ENCODE measurements at regions of chr3 and their contacts with region 1.

Region 1: GRCh38 chr3:132399054-132399929 is 18.0 kb upstream of the DNAJC13 start:
- DNase-seq: peak; percentile 27
- H3K4me3 Mint-ChIP-seq: no peak overlapping the region
- H3K27ac Mint-ChIP-seq: no peak overlapping the region
- H3K4me1 Mint-ChIP-seq: no peaks in the 10 kb centered on the region
- H3K27me3 Mint-ChIP-seq: peaks cover 3% of the 10 kb centered on the region

Region 2: GRCh38 chr3:132034486-132035464 is 364.5 kb before region 1 on chr3 and contains the start of gene CPNE4:
- CTCF ChIA-PET with region 1: no interaction called
- POLR2A ChIA-PET with region 1: no interaction called
- intact Hi-C with region 1: loop called (anchors 10 kb)
- DNase-seq: peak; percentile 83
- H3K4me3 Mint-ChIP-seq: no peak within 1 kb of the TSS
- H3K27ac Mint-ChIP-seq: no peak within 1 kb of the TSS
- H3K4me1 Mint-ChIP-seq: peaks cover 10% of the 10 kb centered on the region
- H3K27me3 Mint-ChIP-seq: peaks cover 64% of the 10 kb centered on the region
- total RNA-seq, gene CPNE4: not detected

Region 3: GRCh38 chr3:132253262-132253878 is 145.9 kb before region 1 on chr3:
- CTCF ChIA-PET with region 1: interaction called, 4 read pairs
- POLR2A ChIA-PET with region 1: no interaction called
- intact Hi-C with region 1: loop called (anchors 2 kb)
- DNase-seq: no peak
- H3K4me3 Mint-ChIP-seq: no peak overlapping the region
- H3K27ac Mint-ChIP-seq: no peak overlapping the region
- H3K4me1 Mint-ChIP-seq: no peaks in the 10 kb centered on the region
- H3K27me3 Mint-ChIP-seq: peaks cover 4% of the 10 kb centered on the region

Region 4: DNA sequence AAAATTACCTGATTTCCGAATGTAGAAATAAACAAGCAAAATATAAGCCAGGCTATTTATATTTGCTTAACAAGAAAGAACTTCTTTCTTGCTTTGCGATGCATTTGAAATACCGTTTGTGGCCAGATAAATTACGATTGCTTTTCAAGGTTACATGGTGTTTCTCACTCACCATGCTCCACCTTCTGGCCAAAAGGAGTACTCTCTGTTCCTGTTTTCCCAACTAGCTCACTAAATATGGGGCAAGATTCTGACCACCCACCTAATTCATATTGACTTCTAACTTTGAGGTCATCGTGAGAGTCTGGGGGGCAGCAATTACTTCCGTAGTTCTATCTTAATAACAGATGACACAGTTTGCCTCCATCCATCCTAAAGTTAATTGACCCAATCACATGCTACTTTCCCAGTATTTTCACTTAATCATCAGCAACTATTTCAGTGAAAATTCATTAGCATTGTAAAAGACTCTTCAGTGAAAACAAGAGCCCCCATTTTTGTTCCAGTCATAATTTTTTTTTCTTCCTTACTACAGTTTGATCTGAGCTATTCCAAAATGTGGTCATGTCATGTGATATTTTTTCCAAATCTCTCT is 56.2 kb before region 1 on chr3:
- CTCF ChIA-PET with region 1: interaction called, 72 read pairs
- POLR2A ChIA-PET with region 1: no interaction called
- intact Hi-C with region 1: no loop called
- DNase-seq: peak; percentile 16
- H3K4me3 Mint-ChIP-seq: no peak overlapping the region
- H3K27ac Mint-ChIP-seq: no peak overlapping the region
- H3K4me1 Mint-ChIP-seq: peaks cover 4% of the 10 kb centered on the region
- H3K27me3 Mint-ChIP-seq: peaks cover 8% of the 10 kb centered on the region

Region 5: DNA sequence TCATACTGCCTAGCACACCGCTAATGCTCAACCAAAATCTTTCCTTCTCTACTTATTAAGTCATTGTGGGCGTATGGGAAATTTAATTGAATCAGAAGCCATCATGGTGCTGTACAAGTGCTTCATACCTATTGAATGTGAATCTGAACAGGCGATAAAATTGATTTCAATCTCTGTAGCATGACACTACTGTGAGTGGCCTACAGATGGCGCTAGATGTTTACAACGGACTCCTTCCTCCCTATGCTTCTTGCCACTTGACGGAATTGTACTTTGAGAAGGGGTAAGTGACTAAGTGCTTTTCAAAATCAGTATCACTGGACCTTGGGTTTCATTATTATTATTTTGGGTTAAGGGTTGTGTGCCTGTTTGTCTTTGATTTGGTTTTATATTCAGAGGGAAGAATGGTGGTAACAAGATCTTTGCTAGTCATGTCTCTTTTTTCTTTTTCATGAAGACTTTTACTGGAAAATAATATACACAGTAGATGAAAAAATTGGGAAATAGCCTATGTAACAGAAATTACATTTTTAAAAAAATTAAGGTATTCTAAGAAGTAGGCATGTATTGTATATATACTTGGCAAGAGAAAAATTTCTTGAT is 46.6 kb before region 1 on chr3:
- CTCF ChIA-PET with region 1: interaction called, 72 read pairs
- POLR2A ChIA-PET with region 1: no interaction called
- intact Hi-C with region 1: loop called (anchors 1 kb)
- DNase-seq: peak; percentile 75
- H3K4me3 Mint-ChIP-seq: no peak overlapping the region
- H3K27ac Mint-ChIP-seq: no peak overlapping the region
- H3K4me1 Mint-ChIP-seq: peaks cover 3% of the 10 kb centered on the region
- H3K27me3 Mint-ChIP-seq: peaks cover 2% of the 10 kb centered on the region

Region 6: DNA sequence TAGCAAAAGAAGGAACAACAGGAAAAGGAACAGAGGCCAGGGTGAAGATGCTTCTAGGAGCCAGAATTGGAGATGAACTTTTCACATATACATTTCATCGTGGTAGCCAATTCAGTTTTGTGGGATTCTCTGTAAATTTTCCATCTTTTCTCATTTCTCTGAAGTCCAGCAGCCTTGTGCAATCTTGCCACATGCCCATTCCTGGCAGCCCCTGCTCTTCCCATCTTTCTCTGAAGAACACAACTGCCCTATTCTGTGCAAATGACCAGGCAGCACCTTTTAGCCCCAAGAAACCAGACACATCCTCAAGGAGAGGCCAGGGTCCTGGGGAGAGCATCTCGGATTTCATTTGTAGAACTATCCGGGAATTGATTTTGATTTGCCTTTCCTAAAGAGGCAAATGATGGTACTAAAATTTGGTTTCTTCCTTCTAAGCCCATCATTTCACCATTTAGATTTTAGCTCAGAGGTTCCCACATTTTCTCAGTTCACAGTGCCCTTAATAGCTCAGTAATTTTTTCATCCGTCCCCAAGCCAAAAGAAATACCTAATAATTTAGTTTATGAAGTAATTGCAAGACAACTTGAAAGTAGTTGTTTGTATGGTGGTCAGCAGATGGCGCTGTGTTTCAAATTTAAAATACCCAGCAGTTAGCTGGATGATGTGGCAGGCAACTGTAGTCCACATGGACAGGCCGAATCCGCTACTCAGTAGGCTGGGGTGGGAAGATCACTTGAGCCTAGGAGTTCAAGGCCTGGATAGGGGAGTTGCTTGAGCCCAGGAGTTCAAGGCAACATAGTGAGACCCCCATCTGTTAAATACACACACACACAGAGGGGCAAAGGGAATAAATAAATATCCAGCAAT is 136.5 kb after region 1 on chr3:
- CTCF ChIA-PET with region 1: no interaction called
- POLR2A ChIA-PET with region 1: no interaction called
- intact Hi-C with region 1: no loop called
- DNase-seq: peak; percentile 53
- H3K4me3 Mint-ChIP-seq: no peak overlapping the region
- H3K27ac Mint-ChIP-seq: no peak overlapping the region
- H3K4me1 Mint-ChIP-seq: peaks cover 2% of the 10 kb centered on the region
- H3K27me3 Mint-ChIP-seq: no peaks in the 10 kb centered on the region